AG04450 (cell line): ENCODE measurements at regions of chrX and their contacts with region 1.

Region 1: DNA sequence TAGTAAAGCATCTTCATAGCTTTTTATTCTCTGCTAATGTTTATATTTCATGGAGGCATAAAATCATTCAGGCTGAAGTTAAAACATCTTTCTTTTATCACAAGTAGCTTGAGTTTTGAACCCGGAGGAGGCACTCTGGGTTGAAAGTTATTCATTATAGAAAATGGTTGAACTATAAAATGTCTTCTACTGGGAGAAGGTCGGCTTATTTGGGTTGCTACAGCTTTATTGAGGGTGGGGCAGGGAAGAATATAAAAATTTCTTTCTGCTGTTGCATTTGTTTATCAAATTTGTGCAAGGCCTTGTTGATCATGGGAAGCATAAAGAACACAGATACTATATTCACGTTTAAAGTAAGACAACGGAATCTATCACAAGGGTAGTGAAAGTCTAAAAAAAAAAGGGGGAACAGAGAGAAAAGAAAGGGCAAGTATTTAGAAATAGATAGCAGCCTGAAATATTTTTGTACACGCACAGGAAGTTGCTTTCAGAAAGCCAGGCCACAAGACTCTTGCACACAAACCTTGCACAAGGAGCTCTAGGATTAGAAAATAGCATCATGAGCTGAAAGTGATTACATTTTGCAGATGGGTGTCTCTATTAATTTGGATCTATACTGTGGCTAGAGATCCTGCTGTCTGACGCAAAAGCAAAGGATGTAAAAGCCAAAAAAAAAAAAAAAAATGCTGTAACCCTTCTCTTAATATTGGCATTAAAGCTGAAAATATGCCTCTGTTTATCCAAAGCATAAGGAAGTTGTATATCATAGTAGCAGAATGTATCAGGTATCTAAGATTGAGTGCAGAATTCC is 37.2 kb upstream of the FAM9C start:
- DNase-seq: no peak
- H3K4me3 ChIP-seq: no peak overlapping the region
- H3K27ac ChIP-seq: peak overlapping the region; percentile 65
- H3K27me3 ChIP-seq: no peaks in the 10 kb centered on the region
- CTCF ChIP-seq: no peak

Region 2: GRCh38 chrX:13101441-13102139 is 20.0 kb after region 1 on chrX:
- CTCF ChIA-PET with region 1: no interaction called
- POLR2A ChIA-PET with region 1: no interaction called
- DNase-seq: no peak
- H3K4me3 ChIP-seq: no peak overlapping the region
- H3K27ac ChIP-seq: peak overlapping the region; percentile 21
- H3K27me3 ChIP-seq: no peaks in the 10 kb centered on the region
- CTCF ChIP-seq: no peak

Region 3: DNA sequence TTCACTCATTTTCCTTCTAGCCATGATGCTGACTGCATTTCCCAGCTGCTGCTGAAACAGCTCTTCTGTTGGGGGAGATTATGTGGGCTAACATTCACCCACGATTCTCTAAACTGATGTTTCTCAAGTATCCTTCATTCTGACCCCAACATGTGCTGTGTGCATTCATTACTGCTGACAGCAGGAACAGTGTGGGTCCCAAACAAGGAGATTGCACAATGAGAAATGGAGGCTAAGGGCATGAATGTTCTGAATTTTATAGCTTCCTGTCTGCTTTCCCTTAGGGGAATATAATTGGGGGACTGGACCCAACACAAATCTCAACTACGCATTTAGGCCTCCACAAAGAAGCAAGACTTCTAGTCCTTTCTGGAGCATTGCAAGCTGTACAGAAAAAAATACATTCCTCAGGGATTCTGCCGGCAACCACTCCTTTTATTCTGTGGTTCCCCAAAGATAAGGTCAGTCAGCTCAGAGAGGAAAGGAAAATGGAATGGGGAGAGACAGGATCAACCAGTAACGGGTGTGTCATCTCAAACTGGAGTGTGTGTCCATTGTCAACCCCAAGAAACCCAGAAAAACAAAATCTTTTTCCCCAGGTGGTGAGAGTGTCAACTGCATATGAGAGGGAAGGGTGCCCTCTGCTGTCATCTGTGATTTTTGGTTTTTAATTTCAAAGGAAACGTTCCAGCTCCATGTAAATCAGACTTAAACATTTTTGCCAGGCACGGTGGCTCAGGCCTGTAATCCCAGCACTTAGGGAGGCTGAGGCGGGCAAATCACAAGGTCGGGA is 406.3 kb after region 1 on chrX:
- CTCF ChIA-PET with region 1: interaction called, 3 read pairs
- POLR2A ChIA-PET with region 1: interaction called, 10 read pairs
- DNase-seq: peak; percentile 75
- H3K4me3 ChIP-seq: no peak overlapping the region
- H3K27ac ChIP-seq: peak overlapping the region; percentile 99
- H3K27me3 ChIP-seq: no peaks in the 10 kb centered on the region
- CTCF ChIP-seq: peak; percentile 50